PC-9 (cell line): ENCODE measurements at regions of chr4 and their contacts with region 1.

Region 1: GRCh38 chr4:152500800-152501434 is 35.0 kb downstream of the FBXW7 start:
- DNase-seq: peak; percentile 34 to 54
- H3K4me3 ChIP-seq: no peak overlapping the region
- H3K27ac ChIP-seq: no peak overlapping the region
- H3K4me1 ChIP-seq: no peaks in the 10 kb centered on the region
- H3K27me3 ChIP-seq: no peaks in the 10 kb centered on the region
- CTCF ChIP-seq: peak; percentile 84

Region 2: GRCh38 chr4:151676301-151676700 is 824.6 kb before region 1 on chr4:
- CTCF ChIA-PET with region 1: no interaction called
- POLR2A ChIA-PET with region 1: no interaction called
- intact Hi-C with region 1: no loop called
- DNase-seq: peak in 1 of 2 experiments; percentile 7
- H3K4me3 ChIP-seq: no peak overlapping the region
- H3K27ac ChIP-seq: no peak overlapping the region
- H3K4me1 ChIP-seq: no peaks in the 10 kb centered on the region
- H3K27me3 ChIP-seq: no peaks in the 10 kb centered on the region
- CTCF ChIP-seq: no peak

Region 3: GRCh38 chr4:152265149-152265621 is 235.7 kb before region 1 on chr4:
- CTCF ChIA-PET with region 1: no interaction called
- POLR2A ChIA-PET with region 1: no interaction called
- intact Hi-C with region 1: no loop called
- DNase-seq: peak in 1 of 2 experiments; percentile 66
- H3K4me3 ChIP-seq: no peak overlapping the region
- H3K27ac ChIP-seq: no peak overlapping the region
- H3K4me1 ChIP-seq: no peaks in the 10 kb centered on the region; the same call in 1 of the 2 replicates
- H3K27me3 ChIP-seq: no peaks in the 10 kb centered on the region
- CTCF ChIP-seq: no peak

Region 4: DNA sequence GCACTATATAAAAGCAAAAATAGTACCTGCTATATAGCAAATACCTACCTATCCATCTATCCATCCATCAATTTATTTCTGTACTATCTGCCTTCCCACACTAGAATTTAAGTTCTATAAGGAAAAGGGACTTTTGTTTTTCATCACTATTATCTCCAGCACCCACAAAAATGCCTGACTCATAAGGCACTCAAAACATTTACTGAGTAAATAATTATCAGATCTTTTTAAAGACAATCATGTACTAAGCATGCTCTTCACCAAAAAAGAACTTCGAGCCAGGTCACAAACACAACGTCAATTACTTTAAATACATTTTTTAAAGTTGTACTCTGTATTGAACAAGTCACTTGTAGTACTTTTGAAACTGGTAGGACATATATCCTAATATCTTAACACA is 84.9 kb before region 1 on chr4:
- CTCF ChIA-PET with region 1: no interaction called
- POLR2A ChIA-PET with region 1: no interaction called
- intact Hi-C with region 1: loop called (anchors 10 kb)
- DNase-seq: peak in 1 of 2 experiments; percentile 50
- H3K4me3 ChIP-seq: no peak overlapping the region
- H3K27ac ChIP-seq: no peak overlapping the region
- H3K4me1 ChIP-seq: peaks cover 4% of the 10 kb centered on the region; the same call in 1 of the 2 replicates
- H3K27me3 ChIP-seq: no peaks in the 10 kb centered on the region
- CTCF ChIP-seq: no peak

Region 5: GRCh38 chr4:152640058-152640833 is 139.3 kb after region 1 on chr4:
- CTCF ChIA-PET with region 1: interaction called, 7 read pairs
- POLR2A ChIA-PET with region 1: no interaction called
- intact Hi-C with region 1: loop called (anchors 1 kb)
- DNase-seq: peak in 1 of 2 experiments; percentile 37
- H3K4me3 ChIP-seq: no peak overlapping the region
- H3K27ac ChIP-seq: no peak overlapping the region
- H3K4me1 ChIP-seq: no peaks in the 10 kb centered on the region
- H3K27me3 ChIP-seq: no peaks in the 10 kb centered on the region
- CTCF ChIP-seq: peak; percentile 79

Region 6: GRCh38 chr4:152735396-152735859 is 234.5 kb after region 1 on chr4:
- CTCF ChIA-PET with region 1: no interaction called
- POLR2A ChIA-PET with region 1: no interaction called
- intact Hi-C with region 1: loop called (anchors 1 kb)
- DNase-seq: no peak
- H3K4me3 ChIP-seq: no peak overlapping the region
- H3K27ac ChIP-seq: no peak overlapping the region
- H3K4me1 ChIP-seq: no peaks in the 10 kb centered on the region
- H3K27me3 ChIP-seq: no peaks in the 10 kb centered on the region
- CTCF ChIP-seq: peak; percentile 72